ENCODE measurements at regions of chr7 and their contacts with region 1.

Region 1: GRCh38 chr7:70660154-70660818 is 471.7 kb upstream of the GALNT17 start:
- DNase-seq: peak in 5 of 9 donors; percentile 30 to 54 (median 39)
- ATAC-seq: peak; percentile 85
- H3K4me3 ChIP-seq: no peak overlapping the region
- H3K4me3 Mint-ChIP-seq: peak overlapping the region in 2 of 10 donors; percentile 32 to 44
- H3K27ac ChIP-seq: no peak overlapping the region
- H3K27ac Mint-ChIP-seq: peak overlapping the region in 7 of 9 donors; percentile 30 to 89 (median 69)
- H3K4me1 ChIP-seq: peaks cover 5 to 29% of the 10 kb centered on the region in 2 donors
- H3K4me1 Mint-ChIP-seq: peaks cover 10 to 32% (median 22%) of the 10 kb centered on the region in 7 donors
- H3K27me3 ChIP-seq: no peaks in the 10 kb centered on the region
- H3K27me3 Mint-ChIP-seq: peaks cover 0 to 4% (median 0%) of the 10 kb centered on the region in 5 donors

Region 2: GRCh38 chr7:70498232-70498992 is 161.9 kb before region 1 on chr7:
- CTCF ChIA-PET with region 1: no interaction called
- POLR2A ChIA-PET with region 1: no interaction called
- intact Hi-C with region 1: no loop called
- DNase-seq: no peak
- ATAC-seq: no peak
- H3K4me3 ChIP-seq: no peak overlapping the region
- H3K4me3 Mint-ChIP-seq: no peak overlapping the region
- H3K27ac ChIP-seq: no peak overlapping the region
- H3K27ac Mint-ChIP-seq: no peak overlapping the region
- H3K4me1 ChIP-seq: no peaks in the 10 kb centered on the region
- H3K4me1 Mint-ChIP-seq: no peaks in the 10 kb centered on the region
- H3K27me3 ChIP-seq: no peaks in the 10 kb centered on the region
- H3K27me3 Mint-ChIP-seq: no peaks in the 10 kb centered on the region

Region 3: DNA sequence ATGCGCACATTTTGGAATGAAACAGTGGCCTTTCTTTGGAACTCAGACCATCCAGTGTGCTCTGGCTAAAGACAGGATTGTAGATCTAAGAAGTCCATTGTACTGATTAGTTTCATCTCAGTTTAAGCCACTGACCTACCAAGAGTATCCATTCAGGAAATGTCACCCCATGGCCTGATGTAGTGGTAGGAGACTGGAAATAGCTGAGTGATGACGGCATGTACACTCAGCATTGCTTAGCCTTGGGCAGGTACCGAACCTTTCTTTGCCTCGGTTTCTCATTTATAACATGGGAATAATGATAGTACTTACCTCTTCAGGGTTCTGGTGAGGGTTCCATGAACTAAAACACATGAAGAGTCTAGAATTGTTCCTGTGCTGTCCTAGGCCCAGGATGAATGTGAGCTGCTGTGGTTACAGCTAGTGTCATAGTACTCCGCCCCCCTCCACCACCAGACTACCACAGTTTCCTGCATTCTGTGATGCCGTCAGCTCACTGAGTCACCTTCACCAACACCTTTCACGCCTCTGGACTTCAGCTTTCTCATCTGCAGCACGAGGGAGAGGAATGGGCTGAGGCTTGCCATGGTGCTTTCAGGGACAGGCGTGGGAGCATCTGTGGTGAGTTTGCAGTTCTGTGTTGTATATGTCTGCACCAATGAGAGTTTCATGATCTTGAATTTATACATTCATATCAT is 12.3 kb before region 1 on chr7:
- CTCF ChIA-PET with region 1: no interaction called
- POLR2A ChIA-PET with region 1: no interaction called
- intact Hi-C with region 1: loop called in 1 of 2 experiments (anchors 1 kb)
- DNase-seq: peak in 8 of 9 donors; percentile 51 to 78 (median 67)
- ATAC-seq: peak; percentile 96
- H3K4me3 ChIP-seq: no peak overlapping the region
- H3K4me3 Mint-ChIP-seq: peak overlapping the region in 9 of 10 donors; percentile 35 to 63 (median 51)
- H3K27ac ChIP-seq: no peak overlapping the region
- H3K27ac Mint-ChIP-seq: peak overlapping the region; percentile 25 to 91 (median 75)
- H3K4me1 ChIP-seq: peaks cover 0 to 21% of the 10 kb centered on the region in 2 donors
- H3K4me1 Mint-ChIP-seq: peaks cover 0 to 25% (median 15%) of the 10 kb centered on the region in 7 donors
- H3K27me3 ChIP-seq: no peaks in the 10 kb centered on the region
- H3K27me3 Mint-ChIP-seq: peaks cover 0 to 20% (median 0%) of the 10 kb centered on the region in 5 donors